ENCODE measurements at regions of chr12 and their contacts with region 1.

Region 1: DNA sequence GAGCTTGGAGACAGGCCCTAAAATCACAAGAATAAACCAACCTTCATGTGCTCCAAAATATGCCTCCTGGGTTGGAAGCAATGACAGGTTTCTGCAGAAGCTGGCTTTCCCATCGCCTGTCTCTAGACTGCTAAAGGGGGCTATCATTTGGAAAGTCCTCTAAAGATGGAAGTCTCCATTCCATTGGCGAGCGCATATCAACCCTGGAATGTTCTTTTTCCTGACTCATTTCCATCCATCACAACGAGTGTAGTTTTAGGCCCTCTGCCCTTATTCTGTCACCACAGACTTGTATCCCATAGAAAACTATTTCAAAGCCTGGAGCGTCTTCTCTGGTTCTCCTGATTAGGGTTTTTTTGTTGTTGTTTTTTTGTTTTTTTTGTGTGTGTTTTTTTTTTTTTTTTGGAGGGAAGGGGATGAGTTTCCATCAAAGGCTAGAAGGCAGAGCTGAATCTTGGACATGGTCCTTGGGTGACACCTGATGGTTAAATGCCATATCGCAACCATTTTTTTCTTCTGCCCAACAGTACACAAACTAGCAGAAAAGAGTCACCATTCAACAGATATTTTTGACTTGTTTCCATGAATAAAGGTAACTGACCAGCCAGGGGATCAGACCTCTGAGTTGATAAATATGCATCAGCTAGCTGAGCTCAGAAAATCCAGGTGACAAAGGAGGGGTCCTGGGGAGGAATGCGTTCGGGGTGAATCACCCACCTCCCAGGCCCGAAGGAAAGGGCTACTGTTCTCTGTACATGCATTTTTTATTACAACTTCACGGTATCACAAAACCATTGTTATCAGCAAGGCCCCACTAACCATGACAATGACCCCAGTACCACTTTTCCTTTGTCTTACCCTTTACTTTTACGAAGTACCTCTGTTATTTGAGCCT is 40.5 kb downstream of the KCNA5 start:
- DNase-seq: no peak
- H3K4me3 Mint-ChIP-seq: no peak overlapping the region
- H3K27ac Mint-ChIP-seq: no peak overlapping the region
- H3K4me1 Mint-ChIP-seq: no peaks in the 10 kb centered on the region
- H3K27me3 Mint-ChIP-seq: peaks cover 5% of the 10 kb centered on the region

Region 2: DNA sequence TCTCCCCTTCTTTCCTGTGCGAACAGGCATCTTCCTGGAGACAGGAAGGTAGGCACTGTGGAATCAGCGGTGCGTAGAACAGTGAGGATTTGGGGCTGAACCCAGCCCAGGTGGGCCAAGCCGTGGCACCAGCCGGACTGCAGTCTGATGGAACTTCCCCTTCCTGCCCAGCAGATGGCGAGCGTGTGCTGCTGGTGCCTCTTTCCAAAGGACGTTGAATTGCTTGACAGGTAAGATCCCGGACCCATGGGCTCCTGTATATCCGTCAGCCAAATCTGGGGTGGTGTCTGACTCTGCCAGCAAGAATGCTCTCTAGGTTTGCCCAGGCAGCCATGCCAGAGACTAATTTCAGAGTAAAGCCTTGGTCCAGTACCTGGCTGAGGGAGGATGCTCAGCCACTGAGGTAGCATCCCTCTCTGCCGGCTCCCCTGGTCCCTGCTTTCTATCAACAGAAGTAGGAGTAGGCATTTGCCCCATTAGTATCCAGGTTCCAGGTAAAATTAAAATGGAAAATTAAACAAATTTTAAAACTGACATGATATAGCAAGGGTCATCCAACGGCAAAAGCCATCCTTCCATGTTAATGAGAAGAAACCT is 61.6 kb before region 1 on chr12:
- intact Hi-C with region 1: loop called (anchors 1 kb)
- DNase-seq: peak; percentile 8
- H3K4me3 Mint-ChIP-seq: no peak overlapping the region
- H3K27ac Mint-ChIP-seq: no peak overlapping the region
- H3K4me1 Mint-ChIP-seq: no peaks in the 10 kb centered on the region
- H3K27me3 Mint-ChIP-seq: peaks cover 10% of the 10 kb centered on the region

Region 3: GRCh38 chr12:5210179-5210922 is 126.1 kb after region 1 on chr12:
- intact Hi-C with region 1: no loop called
- DNase-seq: no peak
- H3K4me3 Mint-ChIP-seq: no peak overlapping the region
- H3K27ac Mint-ChIP-seq: no peak overlapping the region
- H3K4me1 Mint-ChIP-seq: no peaks in the 10 kb centered on the region
- H3K27me3 Mint-ChIP-seq: peaks cover 3% of the 10 kb centered on the region

Measured in activated T-helper 1 cell treated with anti-CD3 and anti-CD28 coated beads, Interleukin-12 subunit alpha, Interleukin-12 subunit beta, Interleukin-2, Interleukin-4 antibody, amounts not matched to agents 30 ng/mL and 10 ng/mL and 1 ng/mL, durations not matched to agents 14 hours and 24 hours and 36 hours (primary cell).